ENCODE measurements at regions of chr7 and their contacts with region 1.

Region 1: DNA sequence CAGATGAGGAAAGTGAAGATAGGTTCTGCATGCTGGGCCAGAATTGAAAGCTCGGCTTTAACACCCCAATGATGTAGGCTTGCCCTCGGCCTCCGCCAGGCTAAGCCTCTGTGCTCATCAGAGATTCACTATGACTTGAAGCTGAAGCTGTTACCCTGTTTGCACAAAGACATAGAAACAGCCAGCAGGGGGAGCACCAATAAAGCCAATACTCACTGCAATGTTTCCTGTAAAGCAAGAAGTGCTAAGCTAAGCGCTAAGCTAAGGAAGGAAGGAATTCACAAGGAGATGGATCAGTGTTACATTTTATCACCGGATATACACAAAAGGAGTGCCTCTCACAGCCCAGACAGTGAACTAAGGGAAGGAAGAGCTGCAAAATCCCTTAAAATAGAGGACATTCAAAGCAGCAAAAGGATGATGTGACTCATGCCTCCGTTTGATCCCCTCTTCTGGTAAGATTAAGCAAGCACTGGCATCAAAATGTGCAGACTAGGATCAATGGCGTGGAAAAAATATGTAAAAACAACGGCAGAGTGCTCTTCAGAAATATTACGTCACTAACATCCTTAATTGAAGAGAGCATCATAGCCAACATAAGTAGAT is 153.8 kb downstream of the COBL start:
- DNase-seq: peak; percentile 91
- H3K4me3 Mint-ChIP-seq: no peak overlapping the region
- H3K27ac Mint-ChIP-seq: no peak overlapping the region
- H3K4me1 Mint-ChIP-seq: peaks cover 5% of the 10 kb centered on the region
- H3K27me3 Mint-ChIP-seq: peaks cover 28% of the 10 kb centered on the region

Region 2: DNA sequence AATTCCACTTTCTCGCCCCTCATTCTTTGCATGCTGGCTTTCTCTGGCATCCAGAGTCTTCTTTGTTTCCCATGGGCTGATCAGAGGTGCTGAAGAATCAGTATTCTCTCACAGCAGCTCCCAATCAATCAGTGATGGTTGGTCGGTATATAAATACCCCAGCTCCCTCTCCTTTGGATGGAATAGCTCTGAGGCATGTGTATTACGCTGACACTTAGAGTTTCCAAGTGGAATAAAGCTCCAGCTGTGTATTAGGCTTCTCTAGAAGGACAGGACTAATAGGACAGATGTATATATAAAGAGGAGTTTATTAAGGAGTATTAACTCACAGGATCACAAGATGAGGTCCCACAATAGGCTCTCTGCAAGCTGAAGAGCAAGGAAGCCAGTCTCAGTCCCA is 161.9 kb before region 1 on chr7:
- intact Hi-C with region 1: no loop called
- DNase-seq: peak; percentile 36
- H3K4me3 Mint-ChIP-seq: no peak overlapping the region
- H3K27ac Mint-ChIP-seq: no peak overlapping the region
- H3K4me1 Mint-ChIP-seq: no peaks in the 10 kb centered on the region
- H3K27me3 Mint-ChIP-seq: peaks cover 6% of the 10 kb centered on the region

Region 3: GRCh38 chr7:51060536-51060935 is 102.3 kb before region 1 on chr7:
- intact Hi-C with region 1: loop called (anchors 5 kb)
- DNase-seq: no peak
- H3K4me3 Mint-ChIP-seq: no peak overlapping the region
- H3K27ac Mint-ChIP-seq: no peak overlapping the region
- H3K4me1 Mint-ChIP-seq: no peaks in the 10 kb centered on the region
- H3K27me3 Mint-ChIP-seq: no peaks in the 10 kb centered on the region

Region 4: DNA sequence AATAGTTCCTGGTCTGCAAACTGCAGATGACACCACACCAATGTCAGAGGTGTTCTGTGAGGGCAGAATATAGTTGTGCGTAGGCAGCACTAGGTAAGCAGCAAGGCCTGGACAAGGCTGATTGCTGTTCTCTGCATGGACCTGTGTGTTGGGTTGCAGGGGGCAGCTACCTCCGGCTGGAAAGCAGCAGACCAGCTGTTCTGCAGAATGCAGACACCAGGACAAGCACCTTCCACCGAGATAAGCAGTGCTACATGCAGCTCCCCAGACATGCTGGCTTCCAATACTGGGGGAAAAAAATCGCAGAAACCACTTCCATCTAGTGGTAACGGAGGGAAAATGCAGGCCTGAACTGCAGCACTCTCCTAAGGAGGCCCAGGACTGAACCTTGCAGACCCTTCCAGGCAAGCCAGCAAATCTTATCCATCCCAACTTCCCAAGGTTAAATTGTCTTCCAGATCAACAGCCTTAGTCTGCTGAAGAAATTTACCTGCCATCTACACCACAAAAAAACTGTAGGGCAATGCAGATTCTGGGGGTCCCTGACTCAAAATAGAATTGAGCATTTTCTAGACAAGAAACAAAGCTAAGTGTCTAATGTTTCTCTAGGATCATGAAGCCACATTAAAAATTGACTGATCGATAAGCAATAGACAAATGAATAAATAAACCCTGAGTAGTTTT is 204.2 kb after region 1 on chr7:
- intact Hi-C with region 1: loop called (anchors 1 kb)
- DNase-seq: peak; percentile 59
- H3K4me3 Mint-ChIP-seq: no peak overlapping the region
- H3K27ac Mint-ChIP-seq: no peak overlapping the region
- H3K4me1 Mint-ChIP-seq: no peaks in the 10 kb centered on the region
- H3K27me3 Mint-ChIP-seq: no peaks in the 10 kb centered on the region